CD14-positive monocyte (primary cell): ENCODE measurements at regions of chr17 and their contacts with region 1.

Region 1: GRCh38 chr17:2937331-2938003 is 125.9 kb downstream of the OR1D5 start:
- DNase-seq: no peak
- H3K4me3 ChIP-seq: no peak overlapping the region
- H3K4me3 Mint-ChIP-seq: no peak overlapping the region
- H3K27ac ChIP-seq: no peak overlapping the region
- H3K27ac Mint-ChIP-seq: peak overlapping the region in 2 of 7 donors; percentile 44 to 67
- H3K4me1 ChIP-seq: peaks cover 0 to 12% of the 10 kb centered on the region in 2 donors
- H3K4me1 Mint-ChIP-seq: peaks cover 24% of the 10 kb centered on the region
- H3K27me3 ChIP-seq: no peaks in the 10 kb centered on the region
- H3K27me3 Mint-ChIP-seq: peaks cover 2 to 5% (median 5%) of the 10 kb centered on the region in 3 donors
- CTCF ChIP-seq: no peak

Region 2: DNA sequence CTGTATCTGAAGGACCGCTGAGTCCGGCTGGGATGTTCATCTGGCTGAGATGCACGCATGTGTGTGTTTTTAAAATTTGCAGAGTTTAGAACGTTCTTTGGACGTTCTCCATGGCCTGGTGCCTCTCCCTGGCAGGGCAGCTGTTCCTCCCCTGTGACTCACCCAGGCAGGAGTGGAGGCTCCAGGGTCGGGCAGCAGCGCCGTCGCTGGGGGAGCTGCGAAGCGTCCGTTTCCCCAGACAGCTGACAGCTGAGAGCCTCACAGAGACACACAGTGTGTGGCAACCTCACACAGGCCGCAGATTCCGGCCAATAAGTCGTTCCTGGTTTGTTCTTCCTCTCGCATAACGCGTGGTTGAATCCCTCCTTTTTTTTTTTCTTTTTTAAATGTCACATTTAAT is 45.4 kb after region 1 on chr17:
- intact Hi-C with region 1: loop called in 1 of 2 experiments (anchors 5 kb)
- DNase-seq: no peak
- H3K4me3 ChIP-seq: no peak overlapping the region
- H3K4me3 Mint-ChIP-seq: no peak overlapping the region
- H3K27ac ChIP-seq: no peak overlapping the region
- H3K27ac Mint-ChIP-seq: peak overlapping the region in 4 of 7 donors; percentile 1 to 81 (median 32)
- H3K4me1 ChIP-seq: no peaks in the 10 kb centered on the region
- H3K4me1 Mint-ChIP-seq: no peaks in the 10 kb centered on the region
- H3K27me3 ChIP-seq: no peaks in the 10 kb centered on the region
- H3K27me3 Mint-ChIP-seq: peaks cover 0 to 3% (median 0%) of the 10 kb centered on the region in 3 donors
- CTCF ChIP-seq: no peak

Region 3: DNA sequence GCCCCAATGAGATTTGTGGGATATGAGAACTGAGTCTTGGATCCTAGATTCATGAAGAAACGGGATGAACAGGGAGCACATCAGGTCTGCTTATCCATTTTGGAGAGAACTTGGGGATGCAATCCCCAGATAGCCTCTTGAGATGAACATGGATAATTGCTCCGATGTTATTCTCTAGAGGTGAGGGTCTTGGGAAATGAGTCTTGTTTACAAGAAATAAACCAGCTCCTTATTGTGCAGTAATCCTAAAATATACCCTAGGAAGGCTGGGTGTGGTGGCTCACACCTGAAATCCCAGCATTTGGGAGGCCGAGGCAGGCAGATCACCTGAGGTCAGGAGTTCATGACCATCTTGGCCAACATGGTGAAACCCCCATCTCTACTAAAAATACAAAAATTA is 166.9 kb after region 1 on chr17 and contains the start of gene OR1D2:
- intact Hi-C with region 1: no loop called
- DNase-seq: no peak
- H3K4me3 ChIP-seq: no peak within 1 kb of the TSS
- H3K4me3 Mint-ChIP-seq: no peak within 1 kb of the TSS
- H3K27ac ChIP-seq: no peak within 1 kb of the TSS
- H3K27ac Mint-ChIP-seq: peak within 1 kb of the TSS in 1 of 7 donors; percentile 19
- H3K4me1 ChIP-seq: peaks cover 0 to 6% of the 10 kb centered on the region in 2 donors
- H3K4me1 Mint-ChIP-seq: no peaks in the 10 kb centered on the region
- H3K27me3 ChIP-seq: no peaks in the 10 kb centered on the region
- H3K27me3 Mint-ChIP-seq: peaks cover 0 to 8% (median 5%) of the 10 kb centered on the region in 3 donors
- CTCF ChIP-seq: no peak
- polyA plus RNA-seq, gene OR1D2: not detected